ENCODE measurements at regions of chr22 and their contacts with region 1.

Region 1: DNA sequence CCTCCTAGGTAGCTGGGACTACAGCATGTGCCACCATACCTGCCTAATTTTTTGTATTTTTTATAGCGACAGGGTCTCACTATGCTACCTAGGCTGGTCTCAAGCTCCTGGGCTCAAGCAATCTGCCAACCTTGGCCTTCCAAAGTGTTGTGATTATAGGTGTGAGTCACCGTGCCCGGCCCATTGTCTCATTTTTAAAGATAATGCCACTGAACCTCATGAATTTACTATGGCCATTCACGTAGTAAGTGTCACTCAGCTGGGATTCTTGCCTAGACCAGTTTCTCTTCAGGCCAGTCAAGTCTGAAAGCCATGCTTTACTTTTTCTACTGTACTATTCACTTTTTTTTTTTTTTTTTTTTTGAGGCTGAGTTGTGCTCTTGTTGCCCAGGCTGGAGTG is 22.4 kb downstream of the DEPDC5 start:
- DNase-seq: no peak
- ATAC-seq: no peak
- H3K4me3 Mint-ChIP-seq: no peak overlapping the region
- H3K27ac Mint-ChIP-seq: no peak overlapping the region
- H3K4me1 Mint-ChIP-seq: no peaks in the 10 kb centered on the region
- H3K27me3 Mint-ChIP-seq: no peaks in the 10 kb centered on the region
- CTCF ChIP-seq: no peak

Region 2: GRCh38 chr22:31757265-31757664 is 19.0 kb before region 1 on chr22:
- CTCF ChIA-PET with region 1: no interaction called
- POLR2A ChIA-PET with region 1: no interaction called
- intact Hi-C with region 1: loop called (anchors 2 kb)
- DNase-seq: no peak
- ATAC-seq: no peak
- H3K4me3 Mint-ChIP-seq: no peak overlapping the region
- H3K27ac Mint-ChIP-seq: no peak overlapping the region
- H3K4me1 Mint-ChIP-seq: peaks cover 27% of the 10 kb centered on the region
- H3K27me3 Mint-ChIP-seq: no peaks in the 10 kb centered on the region
- CTCF ChIP-seq: no peak

Region 3: GRCh38 chr22:31876156-31876920 is 100.1 kb after region 1 on chr22:
- CTCF ChIA-PET with region 1: no interaction called
- POLR2A ChIA-PET with region 1: no interaction called
- intact Hi-C with region 1: no loop called
- DNase-seq: no peak
- ATAC-seq: no peak
- H3K4me3 Mint-ChIP-seq: no peak overlapping the region
- H3K27ac Mint-ChIP-seq: no peak overlapping the region
- H3K4me1 Mint-ChIP-seq: peaks cover 3% of the 10 kb centered on the region
- H3K27me3 Mint-ChIP-seq: no peaks in the 10 kb centered on the region
- CTCF ChIP-seq: no peak

Measured in activated B cell treated with CpG ODN at 0.5 μM for 24 hours (primary cell).